HepG2 (cell line): ENCODE measurements at regions of chr17 and their contacts with region 1.

Region 1: DNA sequence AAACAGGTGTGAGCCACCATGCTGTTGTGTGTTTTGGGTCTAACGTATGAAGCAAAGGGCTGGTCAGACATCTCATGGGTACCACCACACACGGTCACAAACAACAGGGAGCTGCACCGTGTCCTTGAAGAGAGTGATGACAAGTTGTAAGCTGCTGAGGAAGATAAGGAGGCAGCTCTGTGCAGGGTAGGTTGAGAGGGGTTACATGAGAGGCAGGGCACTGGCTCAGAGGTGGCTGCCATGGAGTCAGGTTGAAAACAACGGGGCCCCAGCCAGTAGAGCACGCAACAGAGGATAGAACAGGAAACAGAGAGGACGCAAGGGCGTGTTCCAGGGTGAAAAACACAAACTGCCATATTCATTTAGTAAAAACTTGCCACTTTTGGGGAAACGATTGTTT is 52.2 kb downstream of the TRARG1 start:
- DNase-seq: no peak
- ATAC-seq: no peak
- H3K4me3 ChIP-seq: no peak overlapping the region
- H3K27ac ChIP-seq: no peak overlapping the region
- H3K4me1 ChIP-seq: no peaks in the 10 kb centered on the region
- H3K27me3 ChIP-seq: peaks cover 0 to 30% of the 10 kb centered on the region in 2 experiments; a peak in 1 of 5 replicates
- CTCF ChIP-seq: no peak
- EP300 ChIP-seq: no peak
- POLR2A ChIP-seq: no peak
- RAD21 ChIP-seq: no peak

Region 2: GRCh38 chr17:1260086-1260769 is 71.5 kb before region 1 on chr17:
- CTCF ChIA-PET with region 1: interaction called, 24 read pairs
- POLR2A ChIA-PET with region 1: no interaction called
- in situ Hi-C with region 1: no loop called
- intact Hi-C with region 1: loop called (anchors 1 kb)
- DNase-seq: no peak
- ATAC-seq: no peak
- H3K4me3 ChIP-seq: peak overlapping the region in 1 of 3 experiments; percentile 66; a peak in 1 of 6 replicates
- H3K27ac ChIP-seq: no peak overlapping the region
- H3K4me1 ChIP-seq: peaks cover 5% of the 10 kb centered on the region; the same call in 1 of the 2 replicates
- H3K27me3 ChIP-seq: peaks cover 2 to 30% of the 10 kb centered on the region in 2 experiments
- CTCF ChIP-seq: no peak
- EP300 ChIP-seq: no peak
- POLR2A ChIP-seq: no peak
- RAD21 ChIP-seq: no peak

Region 3: DNA sequence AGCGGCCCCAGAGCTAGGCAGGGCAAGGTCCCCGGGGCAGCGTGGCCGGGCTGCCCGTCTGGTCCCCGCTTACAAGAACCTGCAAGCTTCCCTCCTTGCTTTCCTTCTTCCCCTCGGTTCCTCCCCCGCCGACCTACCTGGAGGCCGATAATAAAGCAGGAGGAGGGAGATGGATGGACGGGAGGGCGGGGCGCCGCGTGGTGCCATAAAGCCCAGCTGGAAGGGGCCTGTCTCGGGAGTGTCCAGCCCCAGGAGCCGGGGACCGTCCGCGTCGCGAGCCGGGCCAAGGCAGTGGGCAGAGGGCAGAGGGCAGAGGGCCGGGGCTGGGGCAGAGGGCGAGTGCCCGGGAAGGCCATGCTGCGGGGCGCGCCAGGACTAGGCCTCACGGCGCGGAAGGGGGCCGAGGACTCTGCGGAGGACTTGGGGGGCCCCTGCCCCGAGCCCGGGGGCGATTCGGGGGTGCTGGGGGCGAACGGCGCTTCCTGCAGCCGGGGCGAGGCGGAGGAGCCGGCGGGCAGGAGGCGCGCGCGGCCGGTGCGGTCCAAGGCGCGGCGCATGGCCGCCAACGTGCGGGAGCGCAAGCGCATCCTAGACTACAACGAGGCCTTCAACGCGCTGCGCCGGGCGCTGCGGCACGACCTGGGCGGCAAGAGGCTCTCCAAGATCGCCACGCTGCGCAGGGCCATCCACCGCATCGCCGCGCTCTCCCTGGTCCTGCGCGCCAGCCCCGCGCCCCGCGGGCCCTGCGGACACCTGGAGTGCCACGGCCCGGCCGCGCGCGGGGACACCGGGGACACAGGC is 61.3 kb before region 1 on chr17 and contains the start of gene BHLHA9:
- CTCF ChIA-PET with region 1: interaction called, 19 read pairs
- POLR2A ChIA-PET with region 1: no interaction called
- in situ Hi-C with region 1: loop called (anchors 5 kb)
- intact Hi-C with region 1: no loop called
- DNase-seq: no peak
- ATAC-seq: no peak
- H3K4me3 ChIP-seq: no peak within 1 kb of the TSS
- H3K27ac ChIP-seq: no peak within 1 kb of the TSS
- H3K4me1 ChIP-seq: peaks cover 21% of the 10 kb centered on the region
- H3K27me3 ChIP-seq: peaks cover 5 to 46% of the 10 kb centered on the region in 2 experiments
- CTCF ChIP-seq: no peak
- EP300 ChIP-seq: no peak
- POLR2A ChIP-seq: no peak
- RAD21 ChIP-seq: no peak
- total RNA-seq, gene BHLHA9: not detected in 2 replicates

Region 4: GRCh38 chr17:1275962-1276736 is 55.6 kb before region 1 on chr17:
- CTCF ChIA-PET with region 1: interaction called, 19 read pairs
- POLR2A ChIA-PET with region 1: no interaction called
- in situ Hi-C with region 1: loop called (anchors 5 kb)
- intact Hi-C with region 1: no loop called
- DNase-seq: peak; percentile 29
- ATAC-seq: peak; percentile 75
- H3K4me3 ChIP-seq: no peak overlapping the region
- H3K27ac ChIP-seq: no peak overlapping the region
- H3K4me1 ChIP-seq: no peaks in the 10 kb centered on the region
- H3K27me3 ChIP-seq: peaks cover 20 to 67% of the 10 kb centered on the region in 2 experiments
- CTCF ChIP-seq: peak; percentile 83
- EP300 ChIP-seq: no peak
- POLR2A ChIP-seq: no peak
- RAD21 ChIP-seq: peak; percentile 76

Region 5: DNA sequence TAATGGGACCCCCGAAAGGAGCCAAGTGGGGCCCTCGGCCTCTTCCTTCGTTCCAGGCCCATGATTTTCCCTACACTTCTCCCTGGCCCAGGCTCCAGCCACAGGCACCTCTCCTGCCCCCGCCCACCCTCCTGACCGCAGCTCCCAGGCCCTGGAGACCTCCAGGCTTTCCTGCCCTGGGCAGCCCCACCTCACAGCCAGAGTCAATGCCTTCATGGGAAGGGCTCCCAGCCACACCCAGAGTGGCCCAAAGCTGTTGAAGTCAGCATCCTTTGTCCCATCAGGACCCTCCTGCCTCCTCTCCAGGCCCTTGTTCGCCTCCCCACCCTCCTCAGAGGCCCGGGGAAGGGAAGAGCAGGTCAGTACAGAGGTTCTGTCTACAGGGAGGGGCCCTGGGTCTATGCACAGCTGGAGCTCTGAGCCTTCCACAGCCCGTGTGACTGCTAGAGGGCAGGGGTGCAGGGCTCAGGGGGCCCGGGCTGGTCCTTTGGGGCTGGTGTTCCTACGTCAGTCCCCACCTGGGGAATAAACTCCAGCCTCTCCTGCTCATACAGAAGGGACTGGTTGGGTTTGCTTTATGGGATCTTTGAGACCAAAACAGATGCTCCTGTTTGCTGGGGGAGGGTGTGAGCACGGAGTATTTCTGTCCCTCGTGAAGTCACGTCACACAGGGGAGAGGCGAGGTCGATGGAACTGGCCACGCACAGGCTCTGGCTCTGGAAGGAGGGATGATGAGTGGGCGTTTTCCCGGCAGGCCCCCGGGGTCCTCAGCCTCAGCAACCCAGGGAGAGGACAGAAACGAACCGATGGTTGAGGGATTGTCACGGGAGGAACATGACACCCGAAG is 32.0 kb before region 1 on chr17:
- CTCF ChIA-PET with region 1: no interaction called
- POLR2A ChIA-PET with region 1: no interaction called
- in situ Hi-C with region 1: no loop called
- intact Hi-C with region 1: no loop called
- DNase-seq: no peak
- ATAC-seq: peak; percentile 12; the same call in 2 of the 3 replicates
- H3K4me3 ChIP-seq: no peak overlapping the region
- H3K27ac ChIP-seq: no peak overlapping the region
- H3K4me1 ChIP-seq: peaks cover 10% of the 10 kb centered on the region
- H3K27me3 ChIP-seq: peaks cover 19 to 89% of the 10 kb centered on the region in 2 experiments
- CTCF ChIP-seq: no peak
- EP300 ChIP-seq: no peak
- POLR2A ChIP-seq: no peak
- RAD21 ChIP-seq: no peak